MCF 10A (cell line): ENCODE measurements at regions of chr5 and their contacts with region 1.

Region 1: GRCh38 chr5:132238169-132238744 is 10.6 kb upstream of the P4HA2 start:
- DNase-seq: peak; percentile 80
- H3K4me3 Mint-ChIP-seq: no peak overlapping the region
- H3K27ac Mint-ChIP-seq: no peak overlapping the region
- H3K4me1 Mint-ChIP-seq: peaks cover under 1% of the 10 kb centered on the region
- H3K27me3 Mint-ChIP-seq: no peaks in the 10 kb centered on the region
- CTCF ChIP-seq: peak; percentile 96

Region 2: GRCh38 chr5:132156413-132156812 is 81.8 kb before region 1 on chr5:
- CTCF ChIA-PET with region 1: no interaction called
- POLR2A ChIA-PET with region 1: no interaction called
- intact Hi-C with region 1: no loop called
- DNase-seq: no peak
- H3K4me3 Mint-ChIP-seq: no peak overlapping the region
- H3K27ac Mint-ChIP-seq: no peak overlapping the region
- H3K4me1 Mint-ChIP-seq: no peaks in the 10 kb centered on the region
- H3K27me3 Mint-ChIP-seq: no peaks in the 10 kb centered on the region
- CTCF ChIP-seq: no peak

Region 3: DNA sequence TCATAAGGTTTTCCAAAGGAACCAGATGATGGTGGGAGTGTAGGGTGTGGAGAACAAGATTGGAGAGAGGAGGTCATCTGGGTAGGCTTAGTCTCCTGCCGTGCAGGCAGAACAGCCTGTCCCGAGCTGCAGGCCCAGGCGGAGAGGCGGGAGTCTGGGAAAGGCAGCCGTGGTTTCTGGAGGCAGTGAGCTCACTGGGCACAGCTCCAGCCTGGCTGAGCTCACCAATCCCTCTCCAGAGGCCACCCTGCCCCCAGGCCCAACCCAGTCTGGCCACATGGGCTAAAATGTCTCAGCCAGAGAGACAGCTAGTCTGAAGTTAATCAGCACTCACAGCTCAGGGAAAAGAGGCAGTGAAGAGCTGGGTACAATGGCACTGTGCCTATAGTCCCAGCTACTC is 22.9 kb before region 1 on chr5:
- CTCF ChIA-PET with region 1: interaction called, 35 read pairs
- POLR2A ChIA-PET with region 1: no interaction called
- intact Hi-C with region 1: no loop called
- DNase-seq: peak; percentile 99
- H3K4me3 Mint-ChIP-seq: peak overlapping the region; percentile 32
- H3K27ac Mint-ChIP-seq: peak overlapping the region; percentile 80
- H3K4me1 Mint-ChIP-seq: peaks cover 15% of the 10 kb centered on the region
- H3K27me3 Mint-ChIP-seq: no peaks in the 10 kb centered on the region
- CTCF ChIP-seq: no peak

Region 4: DNA sequence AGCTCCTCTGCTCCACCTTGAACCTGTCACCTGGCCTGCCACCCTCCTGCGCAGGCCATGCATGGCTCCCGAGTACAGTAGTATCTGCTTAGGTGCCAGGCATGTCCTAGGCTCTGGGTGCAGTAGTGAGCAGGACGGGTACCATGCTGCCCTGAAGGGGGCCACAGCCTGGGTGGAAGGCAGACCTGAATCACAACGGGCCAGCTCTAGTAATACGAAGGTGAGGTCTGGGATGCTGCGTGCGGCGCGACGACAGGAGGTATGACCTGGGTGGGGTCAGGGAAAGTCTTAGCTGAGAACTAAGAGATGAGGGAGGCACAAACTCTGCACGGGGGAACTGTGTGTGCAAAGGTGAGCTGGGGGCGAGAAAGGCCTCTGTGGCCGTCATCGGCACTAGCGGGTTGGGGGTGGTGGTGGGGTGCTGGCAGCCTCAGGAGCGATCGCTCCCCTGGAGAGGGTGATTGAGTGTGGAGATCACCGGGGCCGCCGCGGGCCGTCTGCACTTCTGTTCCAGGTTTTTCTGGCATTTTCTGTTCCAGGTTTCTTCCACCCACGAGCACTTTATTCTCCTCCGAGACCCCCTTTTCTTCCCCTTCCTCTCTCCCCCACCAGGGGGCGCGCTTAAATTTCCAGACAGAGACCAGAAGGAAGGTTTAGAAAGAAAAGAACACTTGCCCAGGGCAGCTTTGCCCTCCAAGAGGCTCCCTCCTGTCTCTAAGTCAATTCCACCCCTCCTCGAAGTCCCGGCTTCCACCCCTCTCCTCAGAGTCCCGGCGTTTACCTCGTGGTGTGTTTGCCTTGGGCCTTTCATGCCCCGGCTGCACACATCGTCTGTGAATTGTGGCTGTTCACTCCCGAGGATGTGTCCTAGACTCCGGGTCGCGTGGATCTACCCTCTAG is 34.3 kb after region 1 on chr5:
- CTCF ChIA-PET with region 1: interaction called, 53 read pairs
- POLR2A ChIA-PET with region 1: no interaction called
- intact Hi-C with region 1: loop called (anchors 1 kb)
- DNase-seq: peak; percentile 68
- H3K4me3 Mint-ChIP-seq: no peak overlapping the region
- H3K27ac Mint-ChIP-seq: no peak overlapping the region
- H3K4me1 Mint-ChIP-seq: peaks cover 2% of the 10 kb centered on the region
- H3K27me3 Mint-ChIP-seq: no peaks in the 10 kb centered on the region
- CTCF ChIP-seq: peak; percentile 96

Region 5: GRCh38 chr5:132310141-132310834 is 72.0 kb after region 1 on chr5:
- CTCF ChIA-PET with region 1: interaction called, 21 read pairs
- POLR2A ChIA-PET with region 1: no interaction called
- intact Hi-C with region 1: no loop called
- DNase-seq: no peak
- H3K4me3 Mint-ChIP-seq: no peak overlapping the region
- H3K27ac Mint-ChIP-seq: no peak overlapping the region
- H3K4me1 Mint-ChIP-seq: peaks cover 17% of the 10 kb centered on the region
- H3K27me3 Mint-ChIP-seq: no peaks in the 10 kb centered on the region
- CTCF ChIP-seq: no peak

Region 6: GRCh38 chr5:132386644-132387286 is 148.5 kb after region 1 on chr5:
- CTCF ChIA-PET with region 1: interaction called, 25 read pairs
- POLR2A ChIA-PET with region 1: no interaction called
- intact Hi-C with region 1: no loop called
- DNase-seq: peak; percentile 87
- H3K4me3 Mint-ChIP-seq: no peak overlapping the region
- H3K27ac Mint-ChIP-seq: peak overlapping the region; percentile 13
- H3K4me1 Mint-ChIP-seq: peaks cover 53% of the 10 kb centered on the region
- H3K27me3 Mint-ChIP-seq: no peaks in the 10 kb centered on the region
- CTCF ChIP-seq: peak; percentile 89